Lower lobe of right lung (tissue), 2 donors: ENCODE measurements at regions of chr12 and their contacts with region 1.

Region 1: DNA sequence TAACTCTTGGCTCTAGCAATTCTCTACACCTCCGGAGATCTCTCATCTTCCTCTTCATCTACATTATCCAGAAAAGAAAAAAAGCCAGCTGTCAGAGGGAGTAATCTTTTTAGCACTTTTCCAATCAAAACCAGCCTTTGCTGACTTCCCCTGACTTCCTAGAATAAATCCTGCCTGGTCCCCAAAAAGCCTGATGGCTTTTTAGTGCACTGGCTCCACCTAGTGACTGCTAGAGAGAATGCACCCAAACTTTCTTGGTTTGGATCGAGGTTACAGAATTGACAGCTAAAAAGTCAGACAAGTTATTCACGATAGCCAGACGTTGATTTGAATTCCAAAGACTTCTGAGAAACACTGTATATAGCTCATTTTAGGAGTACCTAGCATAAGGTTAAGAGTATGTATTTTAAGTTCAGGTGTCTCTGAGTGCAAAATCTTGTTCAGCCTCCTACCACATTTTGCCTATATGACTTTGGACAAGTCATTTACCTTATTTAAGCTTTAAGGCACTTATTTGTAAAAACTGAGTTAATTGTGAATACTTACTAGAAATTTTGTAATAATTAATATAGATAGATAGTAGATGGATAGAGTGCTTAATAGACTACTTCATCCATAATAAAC is 185.7 kb upstream of the GRIN2B start:
- DNase-seq: no peak
- ATAC-seq: peak; percentile 61 to 63
- H3K4me3 ChIP-seq: no peak overlapping the region
- H3K27ac ChIP-seq: no peak overlapping the region
- H3K4me1 ChIP-seq: no peaks in the 10 kb centered on the region
- H3K27me3 ChIP-seq: no peaks in the 10 kb centered on the region
- CTCF ChIP-seq: peak; percentile 93

Region 2: GRCh38 chr12:13864081-13864673 is 302.9 kb before region 1 on chr12:
- intact Hi-C with region 1: loop called (anchors 5 kb)
- DNase-seq: peak; percentile 77
- ATAC-seq: peak; percentile 79 to 86
- H3K4me3 ChIP-seq: no peak overlapping the region
- H3K27ac ChIP-seq: no peak overlapping the region
- H3K4me1 ChIP-seq: no peaks in the 10 kb centered on the region
- H3K27me3 ChIP-seq: peaks cover 11% of the 10 kb centered on the region
- CTCF ChIP-seq: peak; percentile 90